Activated T-helper 1 cell treated with anti-CD3 and anti-CD28 coated beads, Interleukin-12 subunit alpha, Interleukin-12 subunit beta, Interleukin-2, Interleukin-4 antibody, amounts not matched to agents 30 ng/mL and 10 ng/mL and 1 ng/mL, durations not matched to agents 14 hours and 24 hours and 36 hours (primary cell): ENCODE measurements at regions of chr10 and their contacts with region 1.

Region 1: GRCh38 chr10:58764087-58764747 is 251.5 kb downstream of the BICC1 start:
- DNase-seq: no peak
- H3K4me3 Mint-ChIP-seq: no peak overlapping the region
- H3K27ac Mint-ChIP-seq: no peak overlapping the region
- H3K4me1 Mint-ChIP-seq: no peaks in the 10 kb centered on the region
- H3K27me3 Mint-ChIP-seq: no peaks in the 10 kb centered on the region

Region 2: DNA sequence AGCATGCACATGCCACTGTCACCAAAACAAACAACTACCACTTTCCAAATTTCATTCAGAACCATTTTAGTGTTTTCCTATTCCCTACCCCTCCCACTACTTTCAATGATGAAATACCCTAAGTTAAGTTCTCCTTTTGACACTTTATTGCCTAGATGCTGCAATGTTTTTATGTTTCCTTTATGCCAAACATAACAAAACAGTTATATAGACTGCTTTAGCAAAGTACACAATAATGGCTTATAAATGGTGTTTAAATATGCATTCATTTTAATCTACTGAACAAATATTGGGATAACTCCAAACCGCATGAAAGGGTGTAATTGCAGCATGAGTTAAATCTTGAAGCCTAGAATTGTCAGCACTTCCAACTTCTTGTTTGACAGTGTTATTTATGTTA is 481.5 kb after region 1 on chr10:
- intact Hi-C with region 1: loop called (anchors 5 kb)
- DNase-seq: no peak
- H3K4me3 Mint-ChIP-seq: no peak overlapping the region
- H3K27ac Mint-ChIP-seq: no peak overlapping the region
- H3K4me1 Mint-ChIP-seq: no peaks in the 10 kb centered on the region
- H3K27me3 Mint-ChIP-seq: peaks cover 4% of the 10 kb centered on the region